Vagina (tissue), 2 donors: ENCODE measurements at regions of chr20 and their contacts with region 1.

Region 1: DNA sequence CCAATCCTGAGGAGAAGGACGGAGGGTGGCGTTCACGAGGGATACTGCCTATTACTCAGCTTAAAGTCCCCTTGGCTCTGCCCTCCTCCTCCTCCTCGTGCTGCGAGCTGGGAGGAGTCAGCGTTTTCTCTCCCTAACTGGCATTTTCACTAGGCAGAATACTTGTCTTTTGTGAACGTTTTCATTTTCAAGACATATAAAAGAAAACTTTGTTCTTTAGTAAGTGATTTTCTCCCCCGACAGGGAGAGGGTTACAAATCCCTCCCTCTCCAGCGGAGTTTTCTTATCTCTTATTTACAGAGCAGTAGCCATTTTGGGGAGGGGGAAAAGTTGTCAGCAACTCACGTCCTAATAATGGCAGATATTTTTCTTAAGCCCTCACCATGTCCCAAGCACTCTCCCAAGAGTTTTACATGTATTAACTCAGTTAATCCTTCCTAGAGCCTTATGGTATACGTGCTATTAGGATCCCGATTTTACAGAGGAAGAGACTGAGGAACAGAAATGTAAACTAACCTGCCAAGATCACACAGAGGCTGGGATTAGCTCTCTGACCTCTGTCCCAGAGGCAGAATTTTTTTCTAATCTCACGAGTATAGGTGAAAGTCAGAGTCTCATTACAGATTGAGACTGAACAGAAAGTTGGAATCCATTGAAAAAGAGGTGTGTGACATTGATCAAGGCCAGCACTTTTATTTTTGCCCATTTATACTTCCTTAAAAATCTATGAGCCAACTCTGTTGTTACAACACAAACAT is 30.0 kb upstream of the ZNF217 start:
- DNase-seq: peak in 1 of 2 donors; percentile 91
- H3K4me3 ChIP-seq: peak overlapping the region; percentile 37 to 40
- H3K27ac ChIP-seq: peak overlapping the region; percentile 90
- H3K4me1 ChIP-seq: peaks cover 42% of the 10 kb centered on the region
- H3K27me3 ChIP-seq: no peaks in the 10 kb centered on the region
- CTCF ChIP-seq: no peak
- POLR2A ChIP-seq: no peak

Region 2: DNA sequence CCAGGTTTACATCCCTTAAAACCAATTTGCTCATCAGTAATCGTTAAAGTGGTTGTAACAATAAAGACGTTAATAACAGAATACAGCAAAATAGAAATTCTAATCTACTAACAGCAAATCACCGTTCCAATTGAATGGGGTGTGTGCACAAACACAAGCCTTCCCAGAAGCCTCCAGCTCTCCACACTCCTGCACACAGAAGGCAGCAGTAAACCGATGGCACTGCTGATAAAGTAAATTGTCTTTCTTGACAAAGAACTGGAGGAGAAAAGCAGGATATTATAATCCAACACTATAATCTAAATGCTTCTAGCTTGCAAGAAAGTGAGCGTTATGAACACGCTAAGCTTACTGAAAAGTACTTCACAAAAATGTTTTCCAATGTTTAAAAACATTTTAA is 37.0 kb before region 1 on chr20:
- intact Hi-C with region 1: loop called (anchors 5 kb)
- DNase-seq: no peak
- H3K4me3 ChIP-seq: no peak overlapping the region
- H3K27ac ChIP-seq: peak overlapping the region; percentile 68
- H3K4me1 ChIP-seq: peaks cover 66% of the 10 kb centered on the region
- H3K27me3 ChIP-seq: no peaks in the 10 kb centered on the region
- CTCF ChIP-seq: no peak
- POLR2A ChIP-seq: no peak